Left cardiac atrium (tissue), 4 donors: ENCODE measurements at regions of chr2 and their contacts with region 1.

Region 1: GRCh38 chr2:25197336-25198208 is 29.2 kb upstream of the POMC start:
- DNase-seq: no peak
- ATAC-seq: no peak

Region 2: DNA sequence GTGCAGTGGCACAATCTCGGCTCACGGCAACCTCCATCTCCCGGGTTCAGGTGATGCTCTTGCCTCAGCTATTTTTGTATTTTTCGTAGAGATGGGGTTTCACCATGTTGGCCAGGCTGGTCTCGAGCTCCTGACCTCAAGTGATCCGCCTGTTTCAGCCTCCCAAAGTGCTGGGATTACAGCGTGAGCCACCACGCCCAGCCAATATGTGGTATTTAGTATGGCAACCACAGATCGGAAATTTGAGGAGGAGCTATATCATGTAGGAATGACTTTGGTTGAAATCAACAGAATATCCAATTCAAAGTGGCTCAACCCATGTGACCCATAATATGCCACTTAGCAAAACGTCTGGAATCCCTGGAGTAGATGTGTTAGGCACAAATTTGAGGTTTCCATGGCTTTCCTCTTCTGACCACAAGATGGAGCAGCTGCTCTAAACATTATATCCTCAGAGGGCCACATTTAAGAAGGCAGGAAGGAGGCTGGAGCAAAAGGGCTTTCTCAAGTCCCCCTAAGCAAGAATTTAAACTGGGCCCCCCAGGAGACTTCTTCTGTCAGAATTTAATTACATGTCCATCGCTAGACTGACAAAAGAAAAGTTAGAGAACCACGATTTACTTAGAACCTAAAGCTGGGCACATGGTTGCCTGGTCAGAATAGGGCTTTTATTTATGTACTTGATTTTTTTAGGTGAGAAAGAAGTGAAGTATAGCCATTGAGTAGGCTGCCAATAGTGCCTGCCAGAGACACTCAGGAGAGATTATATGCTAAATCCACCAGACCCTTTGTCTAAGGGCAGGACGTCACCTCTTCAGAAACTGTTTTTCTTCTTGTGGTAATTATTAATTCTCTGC is 787.6 kb before region 1 on chr2:
- intact Hi-C with region 1: loop called in 1 of 2 experiments (anchors 10 kb)
- DNase-seq: no peak
- ATAC-seq: peak; percentile 79 to 82

Region 3: DNA sequence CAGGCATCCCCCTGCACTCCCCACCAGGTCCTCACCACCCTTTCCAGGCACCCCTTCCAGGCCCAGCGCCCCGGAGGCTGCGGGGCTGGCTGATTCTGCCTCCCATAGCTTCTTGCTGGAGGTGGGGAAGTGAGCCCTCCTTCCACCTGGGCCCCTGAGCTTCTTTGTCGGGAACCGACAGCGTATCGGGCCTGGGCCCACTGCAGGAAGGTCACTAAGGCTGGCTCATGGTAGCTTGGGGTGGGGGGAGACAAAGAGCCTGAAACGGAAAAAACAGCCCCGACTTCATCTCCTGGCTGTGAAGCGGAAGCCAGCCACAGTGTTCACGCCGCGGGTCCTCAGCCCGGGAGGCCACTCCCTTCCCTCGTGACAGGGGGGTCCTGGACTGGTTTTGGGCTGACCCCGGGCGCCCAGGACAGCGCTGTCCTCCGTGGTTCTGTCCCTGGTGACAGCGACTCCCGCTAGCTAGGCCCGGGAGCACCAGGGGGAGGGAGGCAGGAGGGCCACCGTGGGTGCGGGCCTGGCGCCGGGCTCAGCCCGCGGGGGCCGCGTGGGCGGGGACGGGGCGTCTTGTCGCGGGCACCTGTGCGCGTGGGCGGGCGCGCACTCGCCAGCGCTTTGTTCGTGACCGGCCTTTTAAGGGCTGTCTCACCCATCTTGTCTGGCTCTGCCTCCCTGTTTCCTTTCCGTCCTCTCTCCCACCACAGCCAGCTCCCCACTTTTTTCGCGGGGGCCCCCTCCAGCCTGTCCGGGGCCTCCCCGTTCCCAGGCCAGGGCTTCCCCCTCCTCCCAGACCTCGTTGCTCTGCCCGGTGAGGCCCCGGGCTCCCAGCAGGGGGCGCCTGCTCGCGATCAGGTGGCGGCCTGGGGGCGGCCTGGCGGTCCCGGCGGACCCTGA is 79.2 kb after region 1 on chr2:
- intact Hi-C with region 1: no loop called
- DNase-seq: peak; percentile 77
- ATAC-seq: peak; percentile 67 to 71